Activated T-helper 2 cell treated with anti-CD3 and anti-CD28 coated beads, Interferon-gamma antibody, Interleukin-2, Interleukin-4, amounts not matched to agents 10 μg/mL and 5 μg/mL and 100 μg/mL, durations not matched to agents 14 hours and 24 hours and 36 hours (primary cell): ENCODE measurements at regions of chr16 and their contacts with region 1.

Region 1: GRCh38 chr16:58629572-58630104 is at the start of gene CNOT1:
- DNase-seq: peak; percentile 99
- H3K4me3 Mint-ChIP-seq: peak within 1 kb of the TSS; percentile 95
- H3K27ac Mint-ChIP-seq: peak within 1 kb of the TSS; percentile 100
- H3K4me1 Mint-ChIP-seq: peaks cover 25% of the 10 kb centered on the region
- H3K27me3 Mint-ChIP-seq: no peaks in the 10 kb centered on the region
- total RNA-seq, gene CNOT1: 264 and 266 TPM in 2 replicates

Region 2: DNA sequence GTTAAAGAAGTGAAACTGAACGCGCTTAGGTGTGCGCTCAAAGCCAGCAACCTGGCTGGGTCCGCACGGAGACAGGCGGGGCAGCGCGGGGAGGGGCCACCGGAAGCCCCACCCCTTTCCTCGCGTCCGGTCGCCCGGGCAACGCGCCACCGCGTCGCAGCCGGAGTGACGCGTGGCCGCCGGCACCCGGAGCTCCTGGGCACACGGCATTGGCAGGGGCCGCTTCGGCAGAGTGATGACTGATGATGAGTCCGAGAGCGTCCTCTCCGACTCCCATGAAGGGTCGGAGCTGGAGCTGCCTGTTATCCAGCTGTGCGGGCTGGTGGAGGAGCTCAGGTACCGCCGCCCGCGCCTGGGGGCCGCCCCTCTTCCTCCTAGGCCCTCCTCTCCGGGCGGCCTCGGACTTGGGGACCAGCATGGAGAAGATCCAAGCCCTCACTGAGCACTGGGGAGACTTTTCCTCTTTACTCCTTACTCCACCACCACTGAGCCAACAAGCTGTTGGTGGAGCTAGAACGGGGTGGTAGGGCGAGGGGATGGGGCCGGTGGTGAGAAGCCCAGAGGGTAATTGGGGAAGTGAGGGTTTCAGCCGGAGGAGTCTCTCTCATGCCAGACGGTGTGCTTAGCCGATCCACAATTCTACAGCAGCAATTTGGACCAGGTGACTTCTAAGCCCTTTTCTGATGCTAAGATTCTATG is 379.7 kb before region 1 on chr16:
- intact Hi-C with region 1: loop called (anchors 1 kb)
- DNase-seq: peak; percentile 83
- H3K4me3 Mint-ChIP-seq: peak overlapping the region; percentile 86
- H3K27ac Mint-ChIP-seq: peak overlapping the region; percentile 76
- H3K4me1 Mint-ChIP-seq: peaks cover 7% of the 10 kb centered on the region
- H3K27me3 Mint-ChIP-seq: peaks cover 4% of the 10 kb centered on the region

Region 3: GRCh38 chr16:58515125-58515870 is 114.3 kb before region 1 on chr16 and contains the start of gene SETD6:
- intact Hi-C with region 1: loop called (anchors 1 kb)
- DNase-seq: peak; percentile 70
- H3K4me3 Mint-ChIP-seq: peak within 1 kb of the TSS; percentile 86
- H3K27ac Mint-ChIP-seq: peak within 1 kb of the TSS; percentile 73
- H3K4me1 Mint-ChIP-seq: peaks cover 31% of the 10 kb centered on the region
- H3K27me3 Mint-ChIP-seq: no peaks in the 10 kb centered on the region
- total RNA-seq, gene SETD6: 24.4 and 24.7 TPM in 2 replicates

Region 4: GRCh38 chr16:58652461-58653140 is 23.0 kb after region 1 on chr16:
- intact Hi-C with region 1: no loop called
- DNase-seq: no peak
- H3K4me3 Mint-ChIP-seq: no peak overlapping the region
- H3K27ac Mint-ChIP-seq: no peak overlapping the region
- H3K4me1 Mint-ChIP-seq: no peaks in the 10 kb centered on the region
- H3K27me3 Mint-ChIP-seq: peaks cover 3% of the 10 kb centered on the region

Region 5: DNA sequence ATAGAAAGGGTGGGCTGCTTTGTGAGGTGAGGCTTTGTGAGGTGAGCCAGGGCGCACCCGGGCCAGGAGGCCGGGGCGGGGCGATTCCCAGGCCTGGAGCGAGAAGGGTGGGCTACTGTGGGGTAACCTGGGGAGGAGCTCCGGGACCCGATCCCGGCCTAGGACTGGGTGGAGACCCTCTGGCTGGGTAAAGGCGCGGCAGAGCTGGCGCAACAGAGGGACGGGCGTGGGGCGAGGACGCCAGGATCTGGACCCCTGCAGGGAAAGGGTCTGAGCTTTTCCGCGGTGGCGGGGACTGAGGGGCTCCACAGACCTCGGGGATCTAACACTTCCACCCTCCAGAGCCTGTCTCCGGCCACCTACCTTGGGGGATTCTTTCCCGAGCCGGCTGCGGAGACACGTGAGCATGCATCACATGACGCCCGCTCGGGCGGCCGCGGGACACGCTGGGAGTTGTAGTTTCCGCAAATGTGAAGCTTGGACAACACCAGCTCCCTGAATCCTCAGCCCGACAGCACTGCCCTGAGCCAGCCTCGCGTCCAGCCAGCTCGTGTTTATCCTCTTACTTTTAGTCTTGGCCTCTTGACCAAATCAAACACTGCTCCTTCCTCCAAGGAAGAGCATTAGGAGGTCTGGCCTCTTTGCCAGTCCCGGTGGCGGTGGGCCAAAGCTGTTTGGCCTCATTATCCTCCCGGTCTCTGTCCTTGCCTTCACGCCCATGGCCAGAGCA is 54.9 kb after region 1 on chr16 and contains the start of gene SLC38A7:
- intact Hi-C with region 1: loop called (anchors 1 kb)
- DNase-seq: peak; percentile 65
- H3K4me3 Mint-ChIP-seq: peak within 1 kb of the TSS; percentile 87
- H3K27ac Mint-ChIP-seq: peak within 1 kb of the TSS; percentile 62
- H3K4me1 Mint-ChIP-seq: peaks cover 9% of the 10 kb centered on the region
- H3K27me3 Mint-ChIP-seq: no peaks in the 10 kb centered on the region
- total RNA-seq, gene SLC38A7: 8.8 and 9.8 TPM in 2 replicates

Region 6: DNA sequence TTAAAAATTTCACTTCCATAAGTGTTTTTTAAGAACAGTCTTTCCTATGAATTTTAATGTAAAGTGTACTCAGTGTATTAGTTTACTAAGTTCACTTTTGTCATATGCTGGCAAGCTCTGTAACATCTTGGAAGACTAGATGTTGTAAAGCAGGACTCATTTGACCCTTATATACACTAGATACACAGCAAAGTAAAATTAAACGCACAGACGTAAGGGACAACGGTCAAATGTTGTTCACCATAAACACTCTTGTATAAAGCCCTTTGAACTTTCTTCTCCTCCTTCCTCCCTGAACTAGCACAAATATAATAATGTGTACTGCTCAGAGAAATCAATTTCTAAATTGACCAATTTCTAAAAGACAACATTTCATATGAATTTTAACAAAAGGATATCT is 111.5 kb after region 1 on chr16:
- intact Hi-C with region 1: no loop called
- DNase-seq: no peak
- H3K4me3 Mint-ChIP-seq: no peak overlapping the region
- H3K27ac Mint-ChIP-seq: no peak overlapping the region
- H3K4me1 Mint-ChIP-seq: no peaks in the 10 kb centered on the region
- H3K27me3 Mint-ChIP-seq: peaks cover 5% of the 10 kb centered on the region

Region 7: GRCh38 chr16:59224401-59224800 is 594.8 kb after region 1 on chr16:
- intact Hi-C with region 1: no loop called
- DNase-seq: no peak
- H3K4me3 Mint-ChIP-seq: no peak overlapping the region
- H3K27ac Mint-ChIP-seq: no peak overlapping the region
- H3K4me1 Mint-ChIP-seq: no peaks in the 10 kb centered on the region
- H3K27me3 Mint-ChIP-seq: no peaks in the 10 kb centered on the region